Dorsolateral prefrontal cortex (tissue), 120 donors: ENCODE measurements at regions of chr11 and their contacts with region 1.

Region 1: DNA sequence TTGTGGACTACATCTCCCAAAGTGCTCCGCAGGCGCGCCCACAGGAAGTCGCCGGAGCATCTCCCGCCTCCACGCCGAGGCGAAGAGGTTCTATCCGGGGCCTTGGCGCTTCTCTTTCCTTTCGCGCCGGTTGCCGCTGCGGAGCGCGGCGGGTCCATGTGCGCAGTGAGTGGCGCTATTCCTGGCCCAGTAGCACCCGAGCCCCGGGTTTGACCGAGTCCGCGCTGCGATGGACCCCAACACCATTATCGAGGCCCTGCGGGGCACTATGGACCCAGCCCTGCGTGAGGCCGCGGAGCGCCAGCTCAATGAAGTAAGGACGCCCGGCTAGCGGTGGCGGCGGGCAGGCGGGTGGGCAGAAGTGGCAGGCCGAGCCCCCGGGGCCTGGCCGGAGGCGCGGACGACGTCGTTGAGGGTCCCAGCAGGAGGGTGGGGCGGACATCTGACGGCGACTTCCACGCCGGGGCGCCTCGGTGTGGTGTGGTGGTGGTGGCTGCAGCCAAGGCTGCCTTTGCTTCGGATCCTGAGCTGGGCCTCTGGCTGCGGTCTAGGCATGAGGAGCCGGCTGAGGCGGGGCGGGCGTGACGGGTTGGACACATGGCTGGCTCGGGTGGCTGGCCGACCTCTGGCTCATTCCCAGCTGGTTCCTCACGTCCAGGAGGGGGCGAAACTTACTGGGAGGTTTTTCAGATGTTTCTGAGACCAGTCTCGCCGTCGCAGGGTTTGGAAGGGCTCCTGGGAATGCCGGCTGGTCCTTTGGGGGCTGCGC is at the start of gene IPO7:
- DNase-seq: peak; percentile 85 to 96 (median 94)
- H3K4me3 ChIP-seq: peak within 1 kb of the TSS; percentile 63 to 98 (median 91)
- H3K27ac ChIP-seq: peak within 1 kb of the TSS in 57 of 59 donors; percentile 12 to 93 (median 81)
- H3K27me3 ChIP-seq: no peaks in the 10 kb centered on the region
- CTCF ChIP-seq: peak in 41 of 56 donors; percentile 2 to 57 (median 26)
- total RNA-seq, gene IPO7: 60.4 to 142 (median 98.8) TPM

Region 2: DNA sequence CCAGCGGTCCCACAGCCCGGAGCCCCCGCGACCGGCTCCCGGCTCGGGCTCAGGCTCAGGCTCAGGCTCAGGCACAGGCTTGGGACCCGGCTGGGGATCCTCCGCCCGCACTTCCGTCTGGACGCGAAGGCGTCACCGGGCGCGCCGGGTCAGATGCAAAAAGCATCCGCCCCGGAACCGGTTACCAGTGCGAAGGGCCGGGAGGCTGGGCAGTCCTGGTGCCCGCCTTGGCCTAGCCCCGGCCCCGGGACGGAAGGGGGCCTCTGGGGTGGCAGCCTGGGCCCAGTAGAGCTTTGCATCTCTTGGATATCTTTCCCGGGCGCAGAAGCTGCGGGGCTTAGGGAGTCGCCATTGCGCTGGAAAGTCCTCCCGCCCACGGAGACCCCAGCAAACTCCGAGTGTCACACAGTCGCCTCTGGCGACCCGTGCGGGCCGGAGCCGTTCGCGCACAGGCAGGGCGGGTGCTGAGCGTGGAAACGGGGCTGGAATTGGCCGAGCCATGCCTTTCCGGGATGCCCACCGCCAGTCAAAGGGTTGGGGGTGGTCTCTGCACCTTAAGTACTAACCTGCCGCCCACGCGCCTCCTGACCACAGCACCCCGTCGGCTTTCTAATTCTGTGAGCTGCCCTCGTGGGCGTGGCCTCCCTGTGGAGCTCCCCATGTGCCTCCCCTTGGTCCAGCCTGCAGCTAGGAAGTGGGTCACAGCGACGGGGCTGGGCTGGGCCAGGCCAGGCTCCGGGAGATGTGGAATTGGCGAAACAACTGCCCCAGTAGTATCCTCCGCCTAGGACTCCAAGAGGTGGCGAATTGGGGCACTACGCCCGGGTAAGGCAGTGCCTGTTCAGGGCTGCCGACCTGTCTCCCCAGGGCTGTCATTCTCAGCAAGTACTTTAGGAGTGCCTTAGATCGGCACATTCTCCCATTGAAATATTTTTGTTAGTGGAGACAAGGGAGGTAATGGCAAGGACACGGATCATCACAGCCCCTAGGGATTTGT is 420.1 kb before region 1 on chr11 and contains the start of gene TMEM9B:
- intact Hi-C with region 1: loop called in 1 of 2 experiments (anchors 10 kb)
- DNase-seq: peak; percentile 73 to 94 (median 90)
- H3K4me3 ChIP-seq: peak within 1 kb of the TSS; percentile 70 to 98 (median 91)
- H3K27ac ChIP-seq: peak within 1 kb of the TSS; percentile 56 to 97 (median 91)
- H3K27me3 ChIP-seq: no peaks in the 10 kb centered on the region
- CTCF ChIP-seq: peak in 13 of 56 donors; percentile 3 to 48 (median 17)
- total RNA-seq, gene TMEM9B: 33.7 to 59.4 (median 47.3) TPM

Region 3: GRCh38 chr11:9160166-9160565 is 224.6 kb before region 1 on chr11:
- intact Hi-C with region 1: loop called in 1 of 2 experiments (anchors 10 kb)
- DNase-seq: no peak
- H3K4me3 ChIP-seq: no peak overlapping the region
- H3K27ac ChIP-seq: peak overlapping the region in 7 of 59 donors; percentile 12 to 43 (median 24)
- H3K27me3 ChIP-seq: no peaks in the 10 kb centered on the region
- CTCF ChIP-seq: no peak

Region 4: GRCh38 chr11:9363954-9364912 is 20.5 kb before region 1 on chr11:
- intact Hi-C with region 1: loop called in 1 of 2 experiments (anchors 2 kb)
- DNase-seq: peak; percentile 77 to 97 (median 91)
- H3K4me3 ChIP-seq: peak overlapping the region; percentile 49 to 84 (median 70)
- H3K27ac ChIP-seq: peak overlapping the region; percentile 87 to 100 (median 98)
- H3K27me3 ChIP-seq: no peaks in the 10 kb centered on the region
- CTCF ChIP-seq: peak in 24 of 56 donors; percentile 5 to 51 (median 26)